Heart right ventricle (tissue), 16 donors: ENCODE measurements at regions of chr3 and their contacts with region 1.

Region 1: DNA sequence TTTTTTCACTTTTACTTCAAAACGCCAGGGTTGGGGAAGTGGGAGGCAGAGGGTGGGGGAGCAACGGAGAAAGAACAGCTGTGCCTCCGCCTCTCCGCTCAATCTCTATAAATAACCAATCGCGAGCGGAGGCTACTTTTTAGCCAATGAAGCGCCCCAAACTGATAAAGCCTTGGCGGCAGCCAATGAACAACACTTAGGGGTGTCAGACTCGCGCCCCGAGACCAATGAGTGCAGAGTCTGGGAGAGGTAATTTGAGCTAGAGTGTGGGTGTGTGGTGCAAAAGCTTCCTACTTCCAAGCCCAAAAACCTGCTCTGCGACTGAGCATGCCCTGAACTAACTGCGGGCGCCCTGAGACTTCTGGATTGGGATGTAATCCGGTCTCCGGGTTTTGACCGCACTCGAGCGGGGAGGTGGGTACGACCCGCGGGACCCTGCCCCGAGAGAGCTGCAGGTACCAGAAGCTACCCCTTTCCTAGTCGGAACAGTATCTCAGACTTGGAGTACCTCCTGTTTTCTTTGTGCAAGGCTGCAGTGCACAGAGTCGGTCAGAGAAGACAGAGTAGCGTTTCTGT is 800 bp upstream of the RAP2B start:
- DNase-seq: peak; percentile 86 to 97
- ATAC-seq: peak; percentile 87 to 97 (median 94)
- H3K4me3 ChIP-seq: peak overlapping the region; percentile 68 to 96 (median 82)
- H3K27ac ChIP-seq: peak overlapping the region; percentile 82 to 96 (median 92)
- H3K4me1 ChIP-seq: peaks cover 0 to 32% (median 26%) of the 10 kb centered on the region in 9 donors
- H3K27me3 ChIP-seq: no peaks in the 10 kb centered on the region
- CTCF ChIP-seq: no peak

Region 2: DNA sequence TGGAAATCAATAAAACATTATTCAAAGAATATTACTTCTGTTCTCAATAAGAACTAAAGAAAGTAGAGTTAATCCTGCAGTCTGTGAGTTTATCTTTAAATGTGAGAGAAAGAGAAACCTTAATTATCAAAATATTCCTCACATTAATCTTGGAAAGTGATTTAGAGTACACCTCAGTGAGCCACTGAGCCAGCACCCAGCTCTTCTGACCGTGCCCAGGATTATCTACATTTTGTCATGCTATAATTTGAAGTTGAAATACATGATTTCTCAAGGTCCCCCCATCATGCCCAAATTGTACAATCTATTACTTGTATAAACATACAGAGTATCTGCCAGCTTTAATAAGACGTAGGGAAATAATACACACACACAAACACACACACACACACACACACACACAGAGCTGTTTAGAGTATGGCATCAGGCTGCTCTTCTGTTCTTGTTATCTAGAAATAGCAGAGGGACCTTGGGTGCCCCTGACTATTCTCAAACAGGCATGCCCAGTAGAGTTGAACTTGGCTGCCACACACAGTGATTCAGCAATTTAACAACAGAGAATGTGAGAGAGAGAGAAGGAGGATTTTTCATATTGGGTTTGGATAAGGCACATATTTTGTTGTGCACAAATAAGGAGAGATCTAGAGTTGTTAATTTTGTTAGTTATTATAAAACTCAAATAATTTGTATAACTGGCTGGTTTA is 251.9 kb before region 1 on chr3:
- intact Hi-C with region 1: no loop called
- DNase-seq: peak in 1 of 2 donors; percentile 57
- ATAC-seq: peak; percentile 78 to 99 (median 94)
- H3K4me3 ChIP-seq: no peak overlapping the region
- H3K27ac ChIP-seq: peak overlapping the region in 5 of 10 donors; percentile 16 to 40 (median 20)
- H3K4me1 ChIP-seq: peaks cover 0 to 5% (median 0%) of the 10 kb centered on the region in 9 donors
- H3K27me3 ChIP-seq: no peaks in the 10 kb centered on the region
- CTCF ChIP-seq: no peak

Region 3: DNA sequence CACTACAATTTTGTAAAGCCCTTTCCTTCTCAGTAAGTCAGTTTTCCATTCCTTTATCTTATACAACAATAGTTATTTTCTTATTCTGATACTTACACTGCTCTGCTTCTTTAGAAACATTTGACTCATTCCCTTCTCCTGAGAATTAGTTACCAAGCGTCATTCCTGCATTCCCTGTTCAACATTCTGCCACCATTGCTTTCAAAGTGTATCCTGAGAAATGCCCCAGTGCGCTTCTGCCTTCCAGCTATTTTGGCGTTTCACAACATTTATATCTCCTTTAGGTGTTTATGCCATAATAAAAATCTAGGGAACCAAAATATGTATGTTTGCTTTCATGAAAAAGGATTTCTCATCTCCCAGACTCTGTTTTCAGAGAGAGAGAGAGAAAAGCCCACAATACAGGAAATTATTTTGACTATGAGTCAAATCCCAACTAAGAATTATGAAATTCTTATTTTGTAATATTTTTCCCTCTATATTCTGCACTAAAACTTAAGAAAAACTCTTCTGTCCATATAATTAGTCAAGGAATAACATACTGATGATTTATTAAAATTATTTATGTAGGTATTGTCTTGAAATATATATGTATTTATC is 117.4 kb before region 1 on chr3:
- intact Hi-C with region 1: loop called in 6 of 10 experiments (anchors 5 to 10 kb)
- DNase-seq: no peak
- ATAC-seq: peak in 1 of 8 donors; percentile 55
- H3K4me3 ChIP-seq: no peak overlapping the region
- H3K27ac ChIP-seq: peak overlapping the region in 1 of 10 donors; percentile 78
- H3K4me1 ChIP-seq: peaks cover 0 to 21% (median 4%) of the 10 kb centered on the region in 9 donors
- H3K27me3 ChIP-seq: no peaks in the 10 kb centered on the region
- CTCF ChIP-seq: no peak

Region 4: GRCh38 chr3:153284282-153284938 is 123.2 kb after region 1 on chr3:
- intact Hi-C with region 1: loop called in 7 of 10 experiments (anchors 5 to 10 kb)
- DNase-seq: peak in 1 of 2 donors; percentile 56
- ATAC-seq: peak in 7 of 8 donors; percentile 80 to 92 (median 87)
- H3K4me3 ChIP-seq: no peak overlapping the region
- H3K27ac ChIP-seq: peak overlapping the region in 7 of 10 donors; percentile 6 to 83 (median 36)
- H3K4me1 ChIP-seq: peaks cover 0 to 36% (median 23%) of the 10 kb centered on the region in 9 donors
- H3K27me3 ChIP-seq: no peaks in the 10 kb centered on the region
- CTCF ChIP-seq: no peak

Region 5: DNA sequence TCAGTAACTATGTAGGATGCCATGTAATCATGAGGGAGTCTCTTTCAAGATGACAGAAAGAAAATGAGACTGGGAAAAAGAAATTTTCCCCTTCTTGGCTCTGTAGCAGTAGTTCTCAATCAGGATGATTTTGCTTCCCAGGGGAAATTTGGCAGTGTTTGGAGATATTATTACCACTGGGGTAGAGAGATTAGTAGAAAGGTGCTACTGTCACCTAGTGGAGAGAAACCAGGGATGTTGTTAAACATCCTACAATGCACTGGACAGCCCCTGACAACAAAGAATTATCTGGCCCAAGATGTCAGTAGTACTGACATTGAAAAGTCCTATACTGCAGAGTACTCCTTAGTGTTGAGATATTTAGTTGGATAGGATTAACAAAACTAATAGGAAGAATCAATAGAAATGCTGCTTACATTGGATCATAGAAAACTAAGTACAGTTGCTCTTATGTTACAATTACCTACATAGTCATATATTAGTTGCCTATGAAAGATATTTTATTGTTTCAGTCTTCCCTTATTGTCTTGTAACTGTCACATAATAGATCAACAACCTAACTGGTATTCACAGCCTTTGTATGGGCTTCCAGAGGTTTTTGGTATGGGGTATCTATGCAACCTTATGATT is 434.1 kb after region 1 on chr3:
- intact Hi-C with region 1: loop called in 1 of 10 experiments (anchors 10 kb)
- DNase-seq: no peak
- ATAC-seq: peak in 4 of 8 donors; percentile 52 to 60 (median 58)
- H3K4me3 ChIP-seq: no peak overlapping the region
- H3K27ac ChIP-seq: no peak overlapping the region
- H3K4me1 ChIP-seq: peaks cover 0 to 12% (median 7%) of the 10 kb centered on the region in 9 donors
- H3K27me3 ChIP-seq: no peaks in the 10 kb centered on the region
- CTCF ChIP-seq: peak; percentile 16 to 71 (median 60)